Endothelial cell of umbilical vein (primary cell): ENCODE measurements at regions of chr4 and their contacts with region 1.

Region 1: GRCh38 chr4:158809611-158810486 is 41.0 kb downstream of the FNIP2 start:
- DNase-seq: peak; percentile 92
- H3K4me3 ChIP-seq: peak overlapping the region in 1 of 3 experiments; percentile 48
- H3K27ac ChIP-seq: peak overlapping the region; percentile 95
- H3K4me1 ChIP-seq: peaks cover 23% of the 10 kb centered on the region
- H3K27me3 ChIP-seq: no peaks in the 10 kb centered on the region
- CTCF ChIP-seq: no peak
- POLR2A ChIP-seq: no peak

Region 2: GRCh38 chr4:158768555-158769174 is 41.2 kb before region 1 on chr4 and contains the start of gene FNIP2:
- CTCF ChIA-PET with region 1: no interaction called
- POLR2A ChIA-PET with region 1: no interaction called
- dilution Hi-C with region 1: no loop called
- intact Hi-C with region 1: loop called (anchors 1 kb)
- DNase-seq: peak; percentile 80
- H3K4me3 ChIP-seq: peak within 1 kb of the TSS; percentile 59 to 80 (median 75)
- H3K27ac ChIP-seq: peak within 1 kb of the TSS; percentile 68
- H3K4me1 ChIP-seq: peaks cover 31% of the 10 kb centered on the region
- H3K27me3 ChIP-seq: no peaks in the 10 kb centered on the region
- CTCF ChIP-seq: no peak
- POLR2A ChIP-seq: peak; percentile 53
- total RNA-seq, gene FNIP2: 13.6 and 14.4 TPM in 2 replicates

Region 3: GRCh38 chr4:158775091-158775651 is 34.7 kb before region 1 on chr4:
- CTCF ChIA-PET with region 1: interaction called, 5 read pairs
- POLR2A ChIA-PET with region 1: interaction called, 4 read pairs
- dilution Hi-C with region 1: no loop called
- intact Hi-C with region 1: loop called (anchors 1 kb)
- DNase-seq: peak; percentile 94
- H3K4me3 ChIP-seq: peak overlapping the region in 1 of 3 experiments; percentile 14
- H3K27ac ChIP-seq: peak overlapping the region; percentile 69
- H3K4me1 ChIP-seq: peaks cover 34% of the 10 kb centered on the region
- H3K27me3 ChIP-seq: no peaks in the 10 kb centered on the region
- CTCF ChIP-seq: no peak
- POLR2A ChIP-seq: no peak

Region 4: DNA sequence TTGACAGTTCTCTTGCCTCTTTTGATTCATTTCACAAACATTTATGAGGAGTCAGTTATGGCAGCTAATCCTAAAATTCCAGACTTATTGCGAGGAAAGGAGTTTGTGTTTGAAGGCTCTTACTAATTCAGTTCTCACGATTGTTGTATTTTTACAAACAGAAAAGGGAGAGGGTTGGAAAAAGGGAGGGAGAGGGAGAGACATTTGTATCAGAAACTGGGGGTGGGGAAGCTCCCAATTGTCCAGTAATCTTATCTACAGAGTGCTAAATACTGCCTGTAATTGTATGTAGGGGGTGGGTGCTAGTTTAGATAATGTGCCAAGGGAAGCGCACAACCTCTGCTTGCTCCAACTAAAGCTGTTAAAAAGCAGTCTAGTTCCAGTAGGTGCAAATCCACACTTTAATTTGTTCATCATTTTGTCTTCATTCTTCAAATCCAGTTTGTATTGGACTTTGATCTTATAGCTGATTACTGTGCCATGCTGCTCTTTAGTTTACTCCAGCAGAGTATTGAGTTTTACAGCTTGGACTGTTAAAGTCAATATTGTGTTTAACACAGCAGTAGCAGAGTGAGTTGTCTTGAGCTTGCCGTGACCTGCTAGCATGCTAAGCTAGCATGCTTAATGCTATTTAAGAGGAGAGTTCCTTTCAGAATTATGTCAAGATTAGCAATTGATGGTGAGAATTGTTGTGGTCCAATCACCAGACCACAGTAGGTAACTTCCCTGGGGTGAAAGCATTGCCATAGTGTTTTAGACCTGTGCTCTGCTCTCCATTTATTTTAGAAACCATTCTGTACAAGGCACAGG is 27.1 kb before region 1 on chr4:
- CTCF ChIA-PET with region 1: interaction called, 5 read pairs
- POLR2A ChIA-PET with region 1: no interaction called
- dilution Hi-C with region 1: no loop called
- intact Hi-C with region 1: loop called (anchors 1 kb)
- DNase-seq: peak; percentile 54
- H3K4me3 ChIP-seq: no peak overlapping the region
- H3K27ac ChIP-seq: peak overlapping the region; percentile 51
- H3K4me1 ChIP-seq: peaks cover 39% of the 10 kb centered on the region
- H3K27me3 ChIP-seq: no peaks in the 10 kb centered on the region
- CTCF ChIP-seq: no peak
- POLR2A ChIP-seq: no peak

Region 5: GRCh38 chr4:158787709-158788475 is 22.0 kb before region 1 on chr4:
- CTCF ChIA-PET with region 1: interaction called, 3 read pairs
- POLR2A ChIA-PET with region 1: no interaction called
- dilution Hi-C with region 1: no loop called
- intact Hi-C with region 1: loop called (anchors 1 kb)
- DNase-seq: no peak
- H3K4me3 ChIP-seq: no peak overlapping the region
- H3K27ac ChIP-seq: no peak overlapping the region
- H3K4me1 ChIP-seq: peaks cover 39% of the 10 kb centered on the region
- H3K27me3 ChIP-seq: no peaks in the 10 kb centered on the region
- CTCF ChIP-seq: no peak
- POLR2A ChIP-seq: no peak

Region 6: GRCh38 chr4:158821228-158821971 is 11.6 kb after region 1 on chr4:
- CTCF ChIA-PET with region 1: interaction called, 8 read pairs
- POLR2A ChIA-PET with region 1: no interaction called
- dilution Hi-C with region 1: no loop called
- intact Hi-C with region 1: loop called (anchors 1 kb)
- DNase-seq: no peak
- H3K4me3 ChIP-seq: no peak overlapping the region
- H3K27ac ChIP-seq: no peak overlapping the region
- H3K4me1 ChIP-seq: peaks cover 45% of the 10 kb centered on the region
- H3K27me3 ChIP-seq: no peaks in the 10 kb centered on the region
- CTCF ChIP-seq: no peak
- POLR2A ChIP-seq: no peak